ENCODE measurements at regions of chr11 and their contacts with region 1.

Region 1: DNA sequence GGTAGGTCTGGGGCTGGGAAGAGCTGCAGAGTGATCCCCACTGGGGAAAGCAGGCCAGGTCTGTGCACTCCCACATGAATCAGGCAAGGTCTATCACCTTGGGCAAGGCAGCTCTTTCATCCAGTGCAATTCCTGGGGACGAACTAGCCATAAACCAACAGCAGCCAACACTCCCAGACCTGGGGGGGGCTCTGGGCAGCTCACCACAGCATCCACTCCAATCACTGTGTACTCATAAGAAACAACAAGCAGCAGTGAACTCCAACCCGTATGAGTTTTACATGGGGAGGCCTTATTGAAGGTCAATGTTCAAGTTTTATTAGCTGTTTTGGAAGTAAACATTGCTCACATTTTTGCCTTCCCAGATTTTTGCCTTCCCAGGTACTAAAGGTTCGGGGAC is 157.4 kb upstream of the NAV2 start:
- DNase-seq: no peak

Region 2: DNA sequence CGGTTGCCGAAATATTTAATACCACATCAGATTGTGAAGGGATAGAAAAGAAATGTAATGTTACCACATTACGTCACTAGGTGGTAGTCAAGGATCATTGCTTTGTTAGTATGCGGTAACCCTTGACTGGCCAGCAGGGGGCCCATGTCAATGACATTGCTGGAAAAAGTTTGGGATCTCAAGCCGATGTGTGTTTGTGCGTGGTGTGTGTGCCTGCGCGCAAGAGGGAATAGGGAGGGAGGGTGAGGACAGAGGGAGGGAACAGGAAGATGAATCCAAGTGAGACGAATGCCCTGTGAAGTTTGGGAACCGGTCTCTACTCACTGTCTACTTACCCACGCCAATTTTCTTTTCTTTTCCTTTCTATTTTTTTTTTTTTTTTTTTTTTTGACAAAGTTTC is 484.0 kb before region 1 on chr11:
- CTCF ChIA-PET with region 1: interaction called, 10 read pairs
- POLR2A ChIA-PET with region 1: no interaction called
- DNase-seq: peak; percentile 75

Measured in HEK293T (cell line).